ENCODE measurements at regions of chr5 and their contacts with region 1.

Region 1: GRCh38 chr5:151126199-151126645 is 31.4 kb downstream of the ANXA6 start:
- DNase-seq: no peak
- H3K4me3 ChIP-seq: no peak overlapping the region
- H3K27me3 ChIP-seq: no peaks in the 10 kb centered on the region
- CTCF ChIP-seq: peak; percentile 85

Region 2: GRCh38 chr5:151141535-151141934 is 15.3 kb after region 1 on chr5:
- CTCF ChIA-PET with region 1: interaction called, 21 read pairs
- POLR2A ChIA-PET with region 1: no interaction called
- DNase-seq: no peak
- H3K4me3 ChIP-seq: no peak overlapping the region
- H3K27me3 ChIP-seq: no peaks in the 10 kb centered on the region
- CTCF ChIP-seq: no peak

Region 3: GRCh38 chr5:151157426-151158286 is 31.4 kb after region 1 on chr5 and contains the start of gene ANXA6:
- CTCF ChIA-PET with region 1: interaction called, 184 read pairs
- POLR2A ChIA-PET with region 1: no interaction called
- DNase-seq: peak; percentile 34
- H3K4me3 ChIP-seq: peak within 1 kb of the TSS; percentile 68
- H3K27me3 ChIP-seq: no peaks in the 10 kb centered on the region
- CTCF ChIP-seq: no peak
- polyA plus RNA-seq, gene ANXA6: 479 and 528 TPM in 2 replicates

Region 4: GRCh38 chr5:151239237-151239861 is 113.1 kb after region 1 on chr5:
- CTCF ChIA-PET with region 1: interaction called, 24 read pairs
- POLR2A ChIA-PET with region 1: no interaction called
- DNase-seq: no peak
- H3K4me3 ChIP-seq: no peak overlapping the region
- H3K27me3 ChIP-seq: peaks cover 7% of the 10 kb centered on the region
- CTCF ChIP-seq: peak; percentile 96

Measured in BJ (cell line).